Activated CD8-positive, alpha-beta memory T cell treated with anti-CD3 and anti-CD28 coated beads, Interleukin-2, amount 10 ng/mL, durations not matched to agents 7 days and 5 days (primary cell): ENCODE measurements at regions of chr1 and their contacts with region 1.

Region 1: DNA sequence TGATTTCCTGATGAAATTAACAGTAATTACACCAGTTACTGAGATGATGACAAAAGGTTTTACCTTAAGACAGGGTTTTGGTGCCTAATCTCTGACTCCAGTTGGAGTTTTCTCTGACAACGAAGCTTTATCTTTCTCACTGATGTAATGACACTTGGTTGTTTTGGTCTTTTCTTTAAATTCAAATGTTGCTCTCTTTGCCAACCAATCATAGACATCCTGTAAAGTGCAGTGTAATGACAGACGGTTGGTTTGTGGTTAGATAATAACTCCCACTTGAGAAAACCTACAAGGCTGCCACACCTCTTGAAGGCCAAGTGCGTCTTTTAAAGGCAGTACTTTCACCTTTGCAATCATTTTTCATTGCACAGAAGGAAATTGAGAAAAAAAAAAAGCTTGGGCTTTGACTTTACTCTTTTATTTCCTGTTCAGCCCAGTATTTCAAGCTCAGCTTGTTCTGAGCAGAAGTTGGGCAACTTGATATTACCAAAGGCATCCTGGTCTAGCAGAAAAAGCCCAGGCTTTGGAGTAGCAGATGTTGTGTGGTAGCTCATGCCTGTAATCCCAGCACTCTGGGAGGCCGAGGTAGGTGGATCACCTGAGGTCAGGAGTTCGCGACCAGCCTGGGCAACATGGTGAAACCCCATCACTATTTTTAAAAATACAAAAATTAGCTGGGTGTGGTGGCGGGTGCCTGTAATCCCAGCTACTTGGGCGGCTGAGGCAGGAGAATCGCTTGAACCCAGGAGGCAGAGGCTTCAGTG is 14.9 kb downstream of the PDIK1L start:
- DNase-seq: peak; percentile 79
- ATAC-seq: peak; percentile 94
- H3K4me3 Mint-ChIP-seq: peak overlapping the region; percentile 74
- H3K27ac Mint-ChIP-seq: peak overlapping the region; percentile 94
- H3K4me1 Mint-ChIP-seq: peaks cover 57% of the 10 kb centered on the region
- H3K27me3 Mint-ChIP-seq: peaks cover 5% of the 10 kb centered on the region

Region 2: GRCh38 chr1:26111530-26112406 is 14.7 kb before region 1 on chr1 and contains the start of gene PDIK1L:
- CTCF ChIA-PET with region 1: interaction called, 66 read pairs
- DNase-seq: peak; percentile 94
- ATAC-seq: peak; percentile 87
- H3K4me3 Mint-ChIP-seq: peak within 1 kb of the TSS; percentile 91
- H3K27ac Mint-ChIP-seq: peak within 1 kb of the TSS; percentile 94
- H3K4me1 Mint-ChIP-seq: peaks cover 30% of the 10 kb centered on the region
- H3K27me3 Mint-ChIP-seq: no peaks in the 10 kb centered on the region
- total RNA-seq, gene PDIK1L: 18.3 to 20.2 TPM

Region 3: GRCh38 chr1:26203642-26204318 is 77.3 kb after region 1 on chr1:
- CTCF ChIA-PET with region 1: no interaction called
- DNase-seq: no peak
- ATAC-seq: no peak
- H3K4me3 Mint-ChIP-seq: no peak overlapping the region
- H3K27ac Mint-ChIP-seq: no peak overlapping the region
- H3K4me1 Mint-ChIP-seq: peaks cover 33% of the 10 kb centered on the region
- H3K27me3 Mint-ChIP-seq: no peaks in the 10 kb centered on the region